Dorsolateral prefrontal cortex (tissue), 120 donors: ENCODE measurements at regions of chr14 and their contacts with region 1.

Region 1: DNA sequence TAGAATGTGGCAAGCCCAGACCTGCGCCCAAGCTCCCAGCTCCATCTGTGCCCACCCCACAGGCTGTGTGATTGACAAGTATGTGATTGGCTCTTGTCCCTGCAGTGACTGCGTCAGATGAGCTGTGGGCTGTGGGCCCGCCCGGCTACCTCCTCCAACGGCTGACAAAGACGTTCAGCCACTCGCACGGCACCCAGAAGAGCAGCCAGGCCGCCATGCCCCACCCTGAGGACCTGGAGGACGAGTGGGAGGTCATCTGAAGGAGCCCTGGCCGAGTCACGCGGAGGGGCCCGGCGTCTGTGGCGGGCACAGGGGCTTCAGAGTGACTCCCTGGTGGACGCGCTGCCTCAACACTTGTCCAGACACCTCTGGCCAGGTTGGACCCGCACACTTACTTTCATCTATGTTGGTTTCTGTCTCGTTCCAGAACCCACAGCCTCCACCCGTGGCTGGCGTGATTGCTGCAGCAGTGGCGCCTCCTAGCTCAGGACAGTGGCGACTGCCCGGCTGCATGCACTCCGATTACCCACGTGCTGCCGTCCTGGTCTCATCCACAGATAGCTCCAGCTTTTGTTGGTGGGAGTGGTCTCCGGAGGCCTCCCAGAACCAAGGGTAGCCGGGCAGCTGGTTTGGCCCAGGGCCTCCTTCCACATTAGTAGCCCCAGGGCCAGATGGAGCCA is 11.4 kb downstream of the ANKRD9 start:
- DNase-seq: peak in 3 of 10 donors; percentile 50 to 74 (median 55)
- H3K4me3 ChIP-seq: peak overlapping the region in 5 of 59 donors; percentile 2 to 22 (median 9)
- H3K27ac ChIP-seq: peak overlapping the region in 40 of 59 donors; percentile 1 to 87 (median 56)
- H3K27me3 ChIP-seq: no peaks in the 10 kb centered on the region
- CTCF ChIP-seq: peak in 40 of 56 donors; percentile 9 to 69 (median 30)

Region 2: DNA sequence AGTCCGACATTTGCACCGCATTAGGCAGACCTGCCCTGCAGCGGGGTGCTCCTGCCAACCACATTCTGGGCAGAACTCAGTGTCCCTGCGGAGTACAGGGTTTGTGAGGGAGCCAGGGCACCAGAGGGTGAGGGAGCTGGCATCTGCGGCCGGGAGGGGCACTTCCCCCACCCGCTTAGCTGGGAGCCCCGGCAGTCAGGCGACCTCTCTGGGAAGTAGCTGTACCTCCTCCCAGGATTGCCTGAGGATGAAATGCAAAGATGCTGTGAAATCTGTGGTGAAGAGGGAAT is 47.1 kb before region 1 on chr14:
- intact Hi-C with region 1: loop called in 1 of 2 experiments (anchors 5 kb)
- DNase-seq: peak in 5 of 10 donors; percentile 19 to 76 (median 48)
- H3K4me3 ChIP-seq: no peak overlapping the region
- H3K27ac ChIP-seq: peak overlapping the region in 47 of 59 donors; percentile 9 to 86 (median 63)
- H3K27me3 ChIP-seq: no peaks in the 10 kb centered on the region
- CTCF ChIP-seq: no peak